Transverse colon (tissue), 4 donors: ENCODE measurements at regions of chr9 and their contacts with region 1.

Region 1: DNA sequence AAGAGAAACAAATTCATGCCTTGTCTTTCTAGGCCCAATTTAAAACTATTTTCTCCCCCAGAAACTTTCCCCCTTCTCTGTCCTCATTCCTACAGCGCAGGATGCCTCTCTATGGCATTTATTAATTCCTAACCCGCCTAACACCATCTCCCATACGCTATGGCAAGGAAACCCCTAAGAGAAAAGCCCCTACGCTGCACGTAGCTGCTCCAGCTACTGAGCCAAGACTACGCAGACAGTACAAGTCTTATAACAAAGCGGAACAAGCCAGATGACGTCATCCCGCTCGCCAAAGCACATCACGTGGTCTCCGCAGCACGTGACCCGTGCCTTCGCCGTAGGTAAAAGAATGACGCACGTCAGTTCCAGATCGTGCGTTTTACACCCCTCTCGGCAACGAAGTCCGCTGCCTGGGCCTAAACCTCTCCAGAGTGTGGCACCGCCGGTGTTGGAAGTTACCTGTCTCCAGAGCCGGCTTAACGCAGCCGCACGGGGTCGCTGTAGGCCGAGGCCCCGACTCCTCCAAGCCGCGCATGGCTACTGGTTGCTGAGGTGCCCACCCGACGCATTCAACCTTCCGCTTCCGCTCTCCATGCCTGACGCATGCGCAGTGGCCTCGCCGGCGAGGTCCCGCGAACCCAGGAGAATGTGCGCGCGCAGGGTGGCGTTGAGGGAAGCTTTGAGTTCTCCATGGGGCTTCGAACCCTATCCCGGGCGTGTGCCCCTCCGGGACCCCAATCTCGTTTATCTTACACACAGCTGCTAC is at the start of gene TRMO:
- DNase-seq: peak; percentile 98
- H3K4me3 ChIP-seq: peak within 1 kb of the TSS; percentile 49 to 62 (median 52)
- H3K27ac ChIP-seq: peak within 1 kb of the TSS; percentile 94 to 98 (median 96)
- H3K4me1 ChIP-seq: peaks cover 0 to 35% (median 12%) of the 10 kb centered on the region in 4 donors
- H3K27me3 ChIP-seq: peaks cover 15% of the 10 kb centered on the region
- CTCF ChIP-seq: peak; percentile 35 to 68 (median 47)
- EP300 ChIP-seq: peak; percentile 56
- POLR2A ChIP-seq: peak; percentile 96
- total RNA-seq, gene TRMO: 25.6 to 37.8 (median 31.1) TPM

Region 2: DNA sequence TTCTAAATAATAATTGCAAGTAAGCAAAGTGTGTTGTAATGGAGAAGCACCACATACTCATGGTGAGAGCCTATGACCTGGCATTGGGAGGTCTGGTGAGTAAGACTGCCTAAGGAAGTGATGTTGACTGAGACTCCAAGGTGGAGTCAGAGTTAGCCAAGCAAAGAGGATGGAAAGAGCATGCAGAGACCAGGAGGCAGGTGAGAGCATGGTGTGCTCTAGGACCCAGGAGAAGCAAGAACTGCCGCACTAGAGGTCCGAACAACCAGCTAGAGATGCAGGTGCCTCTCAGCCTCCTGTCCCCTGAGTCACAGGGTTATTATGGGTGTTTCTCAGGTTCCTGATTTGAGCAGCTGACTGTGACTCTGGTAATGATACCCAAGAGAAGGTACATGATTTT is 88.3 kb after region 1 on chr9:
- in situ Hi-C with region 1: no loop called
- intact Hi-C with region 1: no loop called
- DNase-seq: peak; percentile 51
- H3K4me3 ChIP-seq: no peak overlapping the region
- H3K27ac ChIP-seq: peak overlapping the region in 2 of 4 donors; percentile 14 to 19
- H3K4me1 ChIP-seq: peaks cover 0 to 9% (median 2%) of the 10 kb centered on the region in 4 donors
- H3K27me3 ChIP-seq: no peaks in the 10 kb centered on the region
- CTCF ChIP-seq: no peak
- EP300 ChIP-seq: no peak
- POLR2A ChIP-seq: no peak

Region 3: DNA sequence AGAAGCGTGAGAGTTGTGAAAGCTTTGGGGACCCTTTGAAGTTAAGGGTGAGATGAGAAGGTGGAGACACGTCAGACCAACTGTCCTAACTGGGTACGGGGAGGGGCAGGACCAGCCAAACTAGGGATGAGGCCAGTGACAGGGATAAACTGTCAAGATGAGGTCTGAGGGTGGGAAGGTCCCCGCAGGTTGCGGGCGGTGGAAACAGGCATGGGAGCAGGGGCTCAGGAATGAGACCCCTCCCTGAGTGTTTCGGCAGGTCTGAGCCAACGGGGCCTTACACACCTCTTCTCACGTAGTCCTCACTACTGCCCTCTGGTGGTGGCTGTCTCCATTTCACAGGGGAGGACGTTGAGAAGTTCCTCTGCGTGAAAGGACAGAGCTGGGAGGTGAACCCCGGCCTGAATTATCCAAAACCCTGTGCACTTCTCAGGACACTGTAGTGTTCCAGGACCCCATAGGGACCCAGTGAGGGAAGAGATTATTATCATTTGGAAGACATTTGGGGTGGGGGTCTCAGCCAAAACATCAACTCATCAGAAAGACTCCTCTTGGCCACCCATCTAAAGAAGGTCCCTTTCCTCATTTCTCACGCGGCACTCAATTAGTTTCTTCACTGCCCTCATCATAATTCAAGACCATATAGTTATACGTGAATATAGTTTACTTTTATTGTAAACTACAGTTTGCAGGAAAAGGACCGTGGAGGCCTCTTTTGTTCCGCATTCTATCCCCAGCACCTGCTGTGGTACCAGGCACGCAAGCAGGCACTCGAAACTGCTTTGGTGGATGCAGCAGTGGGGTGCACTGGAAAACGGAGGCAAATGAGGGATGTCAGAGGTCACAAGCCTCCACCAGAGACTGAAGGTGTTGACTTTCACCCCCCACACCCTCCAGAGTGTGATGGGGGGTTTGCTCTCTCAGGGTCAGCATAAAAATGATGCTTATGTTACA is 112.7 kb after region 1 on chr9:
- in situ Hi-C with region 1: loop called in 2 of 4 experiments (anchors 10 to 25 kb)
- intact Hi-C with region 1: loop called (anchors 1 kb)
- DNase-seq: peak; percentile 93
- H3K4me3 ChIP-seq: no peak overlapping the region
- H3K27ac ChIP-seq: no peak overlapping the region
- H3K4me1 ChIP-seq: peaks cover 0 to 12% (median 8%) of the 10 kb centered on the region in 4 donors
- H3K27me3 ChIP-seq: no peaks in the 10 kb centered on the region
- CTCF ChIP-seq: peak; percentile 80 to 88 (median 83)
- EP300 ChIP-seq: no peak
- POLR2A ChIP-seq: no peak